PC-9 (cell line): ENCODE measurements at regions of chr1 and their contacts with region 1.

Region 1: DNA sequence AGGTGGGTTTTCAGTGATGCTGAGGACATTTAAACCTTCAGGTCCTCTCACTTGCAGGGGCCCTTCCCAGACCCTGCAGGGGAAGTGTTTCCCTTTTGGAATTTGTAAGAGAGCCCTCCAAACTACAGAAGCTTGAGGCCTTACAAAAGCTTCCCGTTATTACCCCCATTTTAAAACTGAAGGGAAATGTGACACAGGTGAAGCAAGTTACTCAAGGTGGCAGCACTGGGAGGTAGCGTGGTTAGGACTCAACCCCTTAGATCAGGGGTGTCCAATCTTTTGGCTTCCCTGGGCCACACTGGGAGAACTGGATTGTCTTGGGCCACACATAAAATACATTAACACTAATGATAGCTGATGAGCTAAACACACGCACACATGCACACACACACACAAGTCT is 15.9 kb upstream of the ZC3H12A start:
- DNase-seq: no peak
- H3K4me3 ChIP-seq: no peak overlapping the region
- H3K27ac ChIP-seq: no peak overlapping the region
- H3K4me1 ChIP-seq: peaks cover 8% of the 10 kb centered on the region
- H3K27me3 ChIP-seq: no peaks in the 10 kb centered on the region
- CTCF ChIP-seq: no peak; the same call in 1 of the 2 replicates

Region 2: GRCh38 chr1:37486680-37487618 is 28.4 kb after region 1 on chr1:
- CTCF ChIA-PET with region 1: interaction called, 21 read pairs
- POLR2A ChIA-PET with region 1: no interaction called
- intact Hi-C with region 1: loop called (anchors 1 kb)
- DNase-seq: peak; percentile 53 to 84
- H3K4me3 ChIP-seq: no peak overlapping the region
- H3K27ac ChIP-seq: no peak overlapping the region
- H3K4me1 ChIP-seq: peaks cover 42% of the 10 kb centered on the region
- H3K27me3 ChIP-seq: no peaks in the 10 kb centered on the region
- CTCF ChIP-seq: peak; percentile 100

Region 3: DNA sequence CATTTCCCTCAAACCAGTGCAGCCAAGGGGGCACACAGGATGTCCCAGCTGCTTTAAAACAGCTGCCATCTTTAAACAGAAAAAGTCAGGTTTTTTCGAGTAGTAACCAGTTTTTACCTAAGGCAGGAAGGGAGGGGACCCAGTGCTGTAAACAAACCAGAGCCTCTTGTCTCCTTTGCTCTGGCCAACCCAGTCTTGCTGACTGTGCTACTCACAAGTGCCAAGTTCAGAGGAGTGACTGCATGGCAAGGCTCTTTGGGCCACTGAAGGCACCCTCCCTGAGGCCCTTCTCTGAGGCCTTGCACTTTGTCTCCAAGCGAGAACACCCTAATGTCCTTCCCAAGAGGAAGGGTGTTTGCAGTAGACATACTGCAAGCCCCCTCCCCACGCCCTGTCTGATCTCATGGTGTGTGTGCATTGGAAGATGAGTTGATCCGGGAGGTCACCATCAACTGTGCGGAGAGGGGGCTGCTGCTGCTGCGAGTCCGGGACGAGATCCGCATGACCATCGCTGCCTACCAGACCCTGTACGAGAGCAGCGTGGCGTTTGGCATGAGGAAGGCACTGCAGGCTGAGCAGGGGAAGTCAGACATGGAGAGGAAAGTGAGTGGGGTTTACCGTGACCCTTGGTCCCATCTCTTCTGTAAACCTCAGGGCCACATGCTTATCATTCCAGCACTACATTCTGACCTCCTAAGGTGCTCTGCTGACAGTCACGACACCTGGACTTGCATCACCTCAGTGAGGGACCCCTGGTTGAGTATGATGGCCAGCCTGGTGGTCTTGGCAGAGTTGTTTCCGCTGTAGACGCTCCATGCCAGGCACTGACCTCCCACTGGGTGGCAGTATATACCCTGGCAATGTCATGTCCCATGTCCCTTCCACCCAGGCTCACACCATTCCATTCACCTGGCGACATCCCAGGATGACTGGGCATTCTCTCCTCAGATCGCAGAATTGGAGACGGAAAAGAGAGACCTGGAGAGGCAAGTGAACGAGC is 102.9 kb after region 1 on chr1:
- CTCF ChIA-PET with region 1: no interaction called
- POLR2A ChIA-PET with region 1: no interaction called
- intact Hi-C with region 1: loop called (anchors 5 kb)
- DNase-seq: peak in 1 of 2 experiments; percentile 27
- H3K4me3 ChIP-seq: no peak overlapping the region
- H3K27ac ChIP-seq: no peak overlapping the region
- H3K4me1 ChIP-seq: 0 out of 2 replicates have a peak, but pooled peaks cover 2% of the 10 kb centered on the region
- H3K27me3 ChIP-seq: no peaks in the 10 kb centered on the region
- CTCF ChIP-seq: peak; percentile 69